Pancreas (tissue), 10 donors: ENCODE measurements at regions of chr22 and their contacts with region 1.

Region 1: DNA sequence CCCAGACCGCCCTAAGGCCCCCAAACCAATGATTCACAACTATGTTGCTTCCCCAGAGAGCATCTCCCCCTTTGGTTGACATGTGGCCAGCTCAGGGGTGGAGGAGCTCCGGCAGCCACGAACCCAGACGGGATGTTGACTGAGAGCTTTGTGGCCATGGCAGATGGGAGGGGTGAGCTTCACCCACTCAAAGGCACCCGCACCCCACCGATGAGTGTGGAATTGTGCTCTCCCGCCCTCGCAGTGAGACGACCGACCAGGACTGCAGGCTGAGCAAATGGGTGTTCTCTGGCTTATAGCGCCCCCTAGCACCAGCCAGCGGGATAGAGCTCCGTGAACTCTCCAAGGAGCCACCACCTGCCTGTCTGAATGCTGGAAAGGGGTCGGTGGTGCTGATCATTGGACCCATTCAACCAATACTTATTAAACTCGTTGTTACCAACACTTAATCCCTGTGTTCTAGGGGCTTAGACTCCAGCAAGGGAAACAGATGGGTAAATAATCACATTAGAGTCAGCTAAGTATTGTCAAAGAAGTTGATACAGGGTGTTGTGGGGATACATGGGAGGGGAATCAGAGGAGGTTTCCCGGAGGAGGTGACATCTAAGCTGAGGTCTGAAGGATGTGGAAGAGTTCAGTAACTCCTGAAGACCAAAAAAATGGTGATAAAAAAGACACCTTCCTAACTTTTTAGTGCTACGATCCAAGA is 4.5 kb upstream of the TIMP3 start:
- DNase-seq: peak; percentile 34 to 84 (median 65)
- ATAC-seq: peak; percentile 70 to 87 (median 84)
- H3K4me3 ChIP-seq: no peak overlapping the region
- H3K27ac ChIP-seq: no peak overlapping the region
- H3K4me1 ChIP-seq: peaks cover 0 to 3% (median 0%) of the 10 kb centered on the region in 3 donors
- H3K27me3 ChIP-seq: peaks cover 0 to 3% (median 0%) of the 10 kb centered on the region in 4 donors
- CTCF ChIP-seq: peak; percentile 59 to 82 (median 76)

Region 2: DNA sequence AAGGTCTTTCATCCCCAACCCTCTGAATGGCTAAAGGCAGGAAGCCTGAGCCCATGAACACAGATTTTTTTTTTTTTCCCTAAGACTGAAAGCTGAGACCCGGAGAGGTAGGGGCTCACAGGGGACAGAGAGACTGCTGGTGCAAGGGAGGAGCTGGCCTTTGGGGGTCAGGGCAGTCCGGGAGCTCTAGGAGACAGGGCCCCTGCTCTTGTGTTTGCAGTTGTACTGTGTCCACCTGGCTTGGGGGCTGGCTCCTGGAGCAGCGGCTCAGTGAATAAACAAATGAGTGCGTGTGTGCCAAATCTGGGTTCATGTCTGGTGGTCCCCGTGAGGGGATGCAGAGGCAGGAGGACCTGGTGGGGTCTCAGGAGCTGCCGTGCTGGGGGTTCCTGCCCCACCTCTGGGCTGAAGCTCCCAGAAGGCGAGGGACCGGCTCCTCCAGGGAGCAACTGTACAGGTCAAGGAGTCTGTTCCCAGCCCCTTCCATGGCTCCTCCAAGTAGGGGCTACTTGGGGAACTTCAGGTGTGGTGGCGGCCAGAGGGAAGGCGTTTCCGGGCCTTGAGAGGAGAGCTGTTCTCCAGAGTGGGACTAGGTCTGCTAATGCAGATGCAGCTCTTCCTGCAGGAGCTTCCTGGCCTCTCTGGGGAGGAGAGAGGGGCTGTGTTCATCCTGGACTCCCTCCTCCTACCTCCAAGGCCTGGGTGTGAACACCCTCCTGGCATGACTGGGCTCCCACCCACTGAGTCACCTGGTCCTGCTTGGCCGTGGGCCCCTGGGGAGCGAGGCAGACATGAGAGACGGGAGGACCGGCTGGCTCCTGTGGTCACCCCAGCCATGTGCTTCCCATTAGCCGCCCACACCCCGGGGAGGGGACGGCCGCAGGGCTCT is 264.8 kb before region 1 on chr22:
- intact Hi-C with region 1: loop called in 2 of 3 experiments (anchors 10 kb)
- DNase-seq: peak in 4 of 6 donors; percentile 25 to 56 (median 42)
- ATAC-seq: peak in 3 of 4 donors; percentile 37 to 43 (median 37)
- H3K4me3 ChIP-seq: no peak overlapping the region
- H3K27ac ChIP-seq: peak overlapping the region; percentile 3 to 25 (median 6)
- H3K4me1 ChIP-seq: peaks cover 0 to 4% (median 0%) of the 10 kb centered on the region in 3 donors
- H3K27me3 ChIP-seq: no peaks in the 10 kb centered on the region
- CTCF ChIP-seq: no peak

Region 3: GRCh38 chr22:32655068-32655467 is 142.0 kb before region 1 on chr22:
- intact Hi-C with region 1: loop called (anchors 5 to 10 kb)
- DNase-seq: no peak
- ATAC-seq: no peak
- H3K4me3 ChIP-seq: no peak overlapping the region
- H3K27ac ChIP-seq: no peak overlapping the region
- H3K4me1 ChIP-seq: no peaks in the 10 kb centered on the region
- H3K27me3 ChIP-seq: no peaks in the 10 kb centered on the region
- CTCF ChIP-seq: no peak

Region 4: DNA sequence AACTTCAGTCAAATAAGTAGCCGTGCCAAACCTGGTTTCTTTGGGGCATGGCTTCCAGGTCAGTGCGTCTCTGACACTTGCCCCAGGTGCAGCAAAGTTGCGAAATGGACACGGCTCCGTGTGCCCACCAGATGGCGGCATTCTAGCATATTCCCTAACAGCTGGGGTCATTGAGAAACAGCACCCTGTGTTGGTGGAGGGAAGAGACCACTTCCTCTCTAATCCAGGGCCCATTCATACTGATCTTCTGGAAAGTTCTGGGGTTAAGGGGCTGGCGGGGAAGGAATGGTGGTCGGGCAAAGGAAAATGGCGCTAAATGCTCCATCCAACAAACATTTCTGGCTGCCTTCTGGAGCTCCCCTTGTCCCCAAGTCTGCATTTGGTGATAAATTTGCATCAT is 136.7 kb before region 1 on chr22:
- intact Hi-C with region 1: loop called (anchors 5 to 10 kb)
- DNase-seq: peak; percentile 42 to 79 (median 64)
- ATAC-seq: peak; percentile 60 to 90 (median 85)
- H3K4me3 ChIP-seq: no peak overlapping the region
- H3K27ac ChIP-seq: no peak overlapping the region
- H3K4me1 ChIP-seq: no peaks in the 10 kb centered on the region
- H3K27me3 ChIP-seq: no peaks in the 10 kb centered on the region
- CTCF ChIP-seq: peak; percentile 32 to 65 (median 54)

Region 5: DNA sequence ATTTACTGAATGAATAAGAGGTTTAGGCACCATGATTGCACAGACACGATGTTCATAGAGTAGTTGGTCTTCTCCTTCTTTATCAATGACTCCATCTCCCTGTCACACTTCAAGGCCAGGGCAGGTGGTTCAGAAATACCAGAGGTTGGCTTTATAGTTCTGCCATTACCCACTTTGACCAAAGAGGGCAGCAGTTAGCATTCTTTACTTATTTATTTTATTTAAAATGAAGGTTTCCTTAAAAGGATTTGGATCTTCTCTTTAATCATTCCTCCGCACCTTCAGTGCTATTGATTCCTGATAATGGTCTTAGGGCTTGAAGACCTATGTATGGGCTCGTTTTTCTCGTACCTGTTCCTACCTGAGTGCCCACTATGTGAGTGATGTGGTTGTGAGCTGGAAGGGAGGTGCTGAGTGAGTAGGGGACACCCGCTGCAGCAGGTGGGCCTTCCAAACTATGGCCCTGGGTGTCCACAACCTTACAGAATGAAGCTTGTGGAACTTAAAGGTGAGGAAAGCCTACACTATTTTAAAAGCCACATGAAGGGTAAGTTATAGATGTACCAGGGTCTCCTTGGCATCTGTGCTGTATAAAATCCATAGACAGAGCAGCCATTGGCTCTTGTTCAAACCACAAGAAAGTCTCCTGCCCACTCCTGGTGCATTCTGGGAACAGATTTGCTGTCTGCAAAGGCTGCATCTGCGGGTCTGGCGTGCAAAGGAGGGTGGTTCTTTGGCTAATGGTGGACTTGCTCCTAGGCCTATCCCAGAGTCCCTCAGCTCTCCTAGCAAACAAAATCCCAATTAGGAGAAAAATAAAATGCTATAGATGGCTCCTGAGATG is 39.5 kb after region 1 on chr22:
- intact Hi-C with region 1: no loop called
- DNase-seq: no peak
- ATAC-seq: peak in 1 of 4 donors; percentile 42
- H3K4me3 ChIP-seq: no peak overlapping the region
- H3K27ac ChIP-seq: no peak overlapping the region
- H3K4me1 ChIP-seq: no peaks in the 10 kb centered on the region
- H3K27me3 ChIP-seq: no peaks in the 10 kb centered on the region
- CTCF ChIP-seq: peak in 3 of 4 donors; percentile 18 to 51 (median 46)

Region 6: GRCh38 chr22:32897400-32897799 is 100.4 kb after region 1 on chr22:
- intact Hi-C with region 1: no loop called
- DNase-seq: no peak
- ATAC-seq: no peak
- H3K4me3 ChIP-seq: no peak overlapping the region
- H3K27ac ChIP-seq: no peak overlapping the region
- H3K4me1 ChIP-seq: no peaks in the 10 kb centered on the region
- H3K27me3 ChIP-seq: no peaks in the 10 kb centered on the region
- CTCF ChIP-seq: no peak